ENCODE measurements at regions of chr9 and their contacts with region 1.

Region 1: DNA sequence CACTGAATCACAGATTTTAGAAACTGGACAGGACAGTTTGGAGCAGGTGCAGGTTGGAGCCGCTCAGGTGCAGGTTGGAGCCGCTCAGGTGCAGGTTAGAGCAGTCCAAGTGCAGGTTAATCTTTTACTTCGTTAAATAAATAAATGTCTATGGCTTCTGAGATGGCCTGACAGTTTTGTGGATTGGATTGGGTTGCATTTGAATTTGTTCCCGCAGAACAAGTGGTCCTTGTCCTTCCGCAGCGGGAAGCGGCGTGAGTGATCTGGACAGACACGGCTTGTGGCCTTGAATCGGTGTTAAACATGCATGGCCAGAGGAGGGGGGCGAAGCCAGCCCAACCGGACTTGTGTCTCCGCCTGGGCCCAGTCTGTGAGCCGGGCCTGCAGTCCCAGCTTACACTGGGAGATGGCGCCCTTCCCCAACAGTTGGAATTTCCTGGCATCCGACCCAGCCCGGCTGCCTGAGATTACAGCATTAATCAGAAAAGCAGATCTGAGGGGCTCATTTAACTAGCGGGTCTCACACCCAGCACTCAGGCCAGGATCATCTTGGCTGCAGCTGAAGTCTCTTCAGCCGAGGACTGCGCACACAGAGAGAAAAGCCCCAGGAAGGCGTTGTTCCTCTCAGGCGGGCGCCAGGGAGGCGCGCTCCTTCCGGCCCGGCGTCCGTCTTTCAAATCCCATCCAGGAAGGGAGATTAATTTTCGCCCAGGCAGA is 1.5 kb upstream of the OLFM1 start:
- DNase-seq: peak; percentile 86
- ATAC-seq: peak; percentile 80

Region 2: DNA sequence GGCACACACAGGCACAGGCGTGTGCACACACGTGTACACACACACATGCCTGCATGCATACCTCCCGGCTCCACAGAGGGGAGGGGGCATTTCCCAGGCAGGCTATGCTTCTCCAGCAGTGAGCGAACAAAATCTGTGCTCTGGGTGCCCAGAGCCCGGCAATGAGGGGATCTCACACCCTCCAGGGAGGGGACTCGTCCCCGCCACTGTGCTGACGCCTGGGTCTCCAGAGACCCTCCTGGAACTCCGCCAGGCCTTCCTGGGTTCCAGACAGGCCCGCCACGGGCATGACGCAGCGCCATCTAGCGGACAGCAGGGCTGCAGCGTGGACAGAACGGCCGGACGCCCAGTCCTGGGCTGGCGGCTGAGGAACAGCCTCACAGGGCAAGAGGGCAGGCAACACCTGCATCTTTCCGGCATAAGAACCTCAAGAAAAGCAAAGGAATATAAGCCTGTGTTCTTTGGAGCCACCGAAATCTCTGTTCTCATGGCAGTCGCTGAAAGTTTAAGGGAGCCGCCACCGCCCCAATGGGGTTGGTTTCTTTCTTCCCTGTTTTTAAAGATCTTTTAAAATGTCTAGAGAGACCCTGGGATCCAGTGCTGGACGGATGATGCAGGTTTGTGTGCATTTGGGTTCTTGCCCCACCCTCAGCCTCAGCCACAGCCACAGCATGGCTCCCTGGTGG is 258.0 kb after region 1 on chr9:
- intact Hi-C with region 1: loop called (anchors 5 kb)
- DNase-seq: peak; percentile 85
- ATAC-seq: peak; percentile 84

Region 3: DNA sequence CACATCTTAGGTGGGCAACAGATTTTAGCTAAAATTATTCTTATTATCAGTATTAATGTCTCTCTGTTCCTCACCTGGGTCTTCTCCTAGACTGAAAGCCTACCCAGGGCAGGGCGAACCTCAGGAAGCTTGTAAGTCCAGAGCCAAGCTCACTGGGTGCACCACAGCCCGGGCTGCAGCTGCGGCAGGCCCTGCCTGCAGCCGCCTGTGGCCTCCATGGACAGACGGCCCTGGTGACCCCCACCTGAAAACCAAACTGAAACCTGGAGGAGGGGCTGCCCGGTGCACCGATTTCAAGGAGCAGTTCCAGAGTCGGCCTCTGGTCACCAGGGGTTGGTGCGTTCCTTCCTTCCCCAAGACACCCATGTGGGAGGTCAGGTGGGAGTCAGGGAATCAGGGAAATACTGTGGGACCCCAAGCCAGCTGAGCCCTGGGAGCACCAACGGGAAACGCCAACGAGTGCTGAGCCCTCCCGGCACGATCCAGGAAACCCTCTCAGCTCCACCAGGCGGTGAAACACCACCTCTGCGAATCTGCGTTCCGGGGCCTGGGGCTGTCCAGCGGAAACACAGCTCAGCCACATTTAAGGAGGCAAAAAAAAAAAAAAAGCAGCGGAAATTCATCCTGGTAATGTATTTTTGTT is 325.0 kb after region 1 on chr9:
- intact Hi-C with region 1: loop called (anchors 10 kb)
- DNase-seq: no peak
- ATAC-seq: no peak

Region 4: GRCh38 chr9:135551031-135551430 is 465.0 kb after region 1 on chr9:
- intact Hi-C with region 1: no loop called
- DNase-seq: no peak
- ATAC-seq: no peak

Measured in left ventricle myocardium superior (tissue), 1 donor.